ENCODE measurements at regions of chr6 and their contacts with region 1.

Region 1: GRCh38 chr6:5471044-5471443 is 209.7 kb downstream of the FARS2 start:
- DNase-seq: peak; percentile 22
- H3K4me3 ChIP-seq: no peak overlapping the region
- H3K27ac ChIP-seq: no peak overlapping the region
- H3K4me1 ChIP-seq: no peaks in the 10 kb centered on the region
- H3K27me3 ChIP-seq: no peaks in the 10 kb centered on the region
- CTCF ChIP-seq: peak; percentile 85 to 90

Region 2: GRCh38 chr6:5670811-5671561 is 199.9 kb after region 1 on chr6:
- CTCF ChIA-PET with region 1: no interaction called
- dilution Hi-C with region 1: no loop called
- in situ Hi-C with region 1: no loop called
- intact Hi-C with region 1: loop called (anchors 2 kb)
- DNase-seq: peak; percentile 32
- H3K4me3 ChIP-seq: no peak overlapping the region
- H3K27ac ChIP-seq: peak overlapping the region; percentile 76
- H3K4me1 ChIP-seq: peaks cover 35% of the 10 kb centered on the region
- H3K27me3 ChIP-seq: no peaks in the 10 kb centered on the region
- CTCF ChIP-seq: no peak

Region 3: GRCh38 chr6:5766260-5766659 is 295.2 kb after region 1 on chr6:
- CTCF ChIA-PET with region 1: no interaction called
- dilution Hi-C with region 1: no loop called
- in situ Hi-C with region 1: no loop called
- intact Hi-C with region 1: loop called (anchors 2 kb)
- DNase-seq: no peak
- H3K4me3 ChIP-seq: no peak overlapping the region
- H3K27ac ChIP-seq: no peak overlapping the region
- H3K4me1 ChIP-seq: no peaks in the 10 kb centered on the region
- H3K27me3 ChIP-seq: no peaks in the 10 kb centered on the region
- CTCF ChIP-seq: no peak

Region 4: GRCh38 chr6:5892669-5893068 is 421.6 kb after region 1 on chr6:
- CTCF ChIA-PET with region 1: no interaction called
- dilution Hi-C with region 1: no loop called
- in situ Hi-C with region 1: no loop called
- intact Hi-C with region 1: loop called (anchors 1 kb)
- DNase-seq: no peak
- H3K4me3 ChIP-seq: no peak overlapping the region
- H3K27ac ChIP-seq: no peak overlapping the region
- H3K4me1 ChIP-seq: no peaks in the 10 kb centered on the region
- H3K27me3 ChIP-seq: peaks cover 2% of the 10 kb centered on the region
- CTCF ChIP-seq: no peak

Region 5: DNA sequence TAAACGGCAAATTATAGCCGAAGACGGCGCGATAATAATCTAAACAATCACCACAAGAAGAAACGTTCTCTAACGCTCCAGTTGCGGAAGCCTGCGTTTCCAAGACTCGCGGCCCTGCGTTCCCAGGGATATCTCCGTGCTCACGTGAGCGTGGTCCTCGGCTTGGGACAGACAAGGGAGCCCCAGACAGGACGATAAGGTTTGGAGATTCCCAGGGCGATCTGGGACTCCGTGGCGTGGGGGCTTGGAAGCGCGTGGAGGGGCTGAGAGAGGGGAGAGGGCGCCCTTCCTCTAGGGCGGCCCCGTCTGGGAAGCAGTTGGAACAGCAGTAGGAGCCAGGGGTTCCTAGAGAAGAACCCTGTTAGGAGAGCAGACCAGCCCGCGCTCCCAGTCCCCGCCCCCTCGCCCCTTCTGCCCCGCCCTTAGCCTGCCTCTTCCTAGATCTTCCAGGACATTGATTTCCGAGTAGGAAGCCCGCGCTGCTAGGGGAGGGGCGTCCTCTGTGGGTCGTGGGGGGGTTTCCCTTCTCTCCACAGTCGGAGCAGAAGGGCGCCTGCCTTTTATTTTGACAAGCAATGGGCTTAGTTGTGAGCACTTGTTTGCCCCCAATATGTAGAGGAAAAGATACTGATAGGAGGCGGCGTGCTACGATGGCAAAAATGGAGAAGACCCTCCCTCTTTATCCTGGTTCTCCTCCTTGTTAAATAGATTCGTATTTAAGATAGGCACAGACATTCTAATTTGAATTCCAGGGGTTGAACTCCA is 525.1 kb after region 1 on chr6:
- CTCF ChIA-PET with region 1: no interaction called
- dilution Hi-C with region 1: no loop called
- in situ Hi-C with region 1: no loop called
- intact Hi-C with region 1: loop called (anchors 5 kb)
- DNase-seq: peak; percentile 58
- H3K4me3 ChIP-seq: peak overlapping the region; percentile 57 to 75 (median 68)
- H3K27ac ChIP-seq: no peak overlapping the region
- H3K4me1 ChIP-seq: peaks cover 14% of the 10 kb centered on the region
- H3K27me3 ChIP-seq: peaks cover 51% of the 10 kb centered on the region
- CTCF ChIP-seq: peak in 1 of 2 donors; percentile 29

Region 6: GRCh38 chr6:6057424-6058053 is 586.5 kb after region 1 on chr6:
- CTCF ChIA-PET with region 1: no interaction called
- dilution Hi-C with region 1: no loop called
- in situ Hi-C with region 1: no loop called
- intact Hi-C with region 1: loop called (anchors 1 kb)
- DNase-seq: peak; percentile 36
- H3K4me3 ChIP-seq: no peak overlapping the region
- H3K27ac ChIP-seq: no peak overlapping the region
- H3K4me1 ChIP-seq: no peaks in the 10 kb centered on the region
- H3K27me3 ChIP-seq: no peaks in the 10 kb centered on the region
- CTCF ChIP-seq: peak; percentile 62 to 65